Calu3 (cell line): ENCODE measurements at regions of chr13 and their contacts with region 1.

Region 1: GRCh38 chr13:95834134-95834765 is 157.3 kb downstream of the DNAJC3 start:
- DNase-seq: peak; percentile 36
- H3K4me3 Mint-ChIP-seq: no peak overlapping the region
- H3K27ac Mint-ChIP-seq: no peak overlapping the region
- H3K4me1 Mint-ChIP-seq: no peaks in the 10 kb centered on the region
- H3K27me3 Mint-ChIP-seq: no peaks in the 10 kb centered on the region
- CTCF ChIP-seq: peak; percentile 32

Region 2: GRCh38 chr13:95676762-95677563 is 157.3 kb before region 1 on chr13 and contains the start of gene DNAJC3:
- CTCF ChIA-PET with region 1: no interaction called
- intact Hi-C with region 1: loop called (anchors 5 kb)
- DNase-seq: peak; percentile 87
- H3K4me3 Mint-ChIP-seq: peak within 1 kb of the TSS; percentile 92
- H3K27ac Mint-ChIP-seq: peak within 1 kb of the TSS; percentile 85
- H3K4me1 Mint-ChIP-seq: peaks cover 6% of the 10 kb centered on the region
- H3K27me3 Mint-ChIP-seq: no peaks in the 10 kb centered on the region
- CTCF ChIP-seq: no peak
- total RNA-seq, gene DNAJC3: 21.2 and 22.2 TPM in 2 replicates

Region 3: GRCh38 chr13:95902741-95903140 is 68.5 kb after region 1 on chr13:
- CTCF ChIA-PET with region 1: no interaction called
- intact Hi-C with region 1: no loop called
- DNase-seq: no peak
- H3K4me3 Mint-ChIP-seq: no peak overlapping the region
- H3K27ac Mint-ChIP-seq: no peak overlapping the region
- H3K4me1 Mint-ChIP-seq: no peaks in the 10 kb centered on the region
- H3K27me3 Mint-ChIP-seq: no peaks in the 10 kb centered on the region
- CTCF ChIP-seq: no peak